ENCODE measurements at regions of chr22 and their contacts with region 1.

Region 1: DNA sequence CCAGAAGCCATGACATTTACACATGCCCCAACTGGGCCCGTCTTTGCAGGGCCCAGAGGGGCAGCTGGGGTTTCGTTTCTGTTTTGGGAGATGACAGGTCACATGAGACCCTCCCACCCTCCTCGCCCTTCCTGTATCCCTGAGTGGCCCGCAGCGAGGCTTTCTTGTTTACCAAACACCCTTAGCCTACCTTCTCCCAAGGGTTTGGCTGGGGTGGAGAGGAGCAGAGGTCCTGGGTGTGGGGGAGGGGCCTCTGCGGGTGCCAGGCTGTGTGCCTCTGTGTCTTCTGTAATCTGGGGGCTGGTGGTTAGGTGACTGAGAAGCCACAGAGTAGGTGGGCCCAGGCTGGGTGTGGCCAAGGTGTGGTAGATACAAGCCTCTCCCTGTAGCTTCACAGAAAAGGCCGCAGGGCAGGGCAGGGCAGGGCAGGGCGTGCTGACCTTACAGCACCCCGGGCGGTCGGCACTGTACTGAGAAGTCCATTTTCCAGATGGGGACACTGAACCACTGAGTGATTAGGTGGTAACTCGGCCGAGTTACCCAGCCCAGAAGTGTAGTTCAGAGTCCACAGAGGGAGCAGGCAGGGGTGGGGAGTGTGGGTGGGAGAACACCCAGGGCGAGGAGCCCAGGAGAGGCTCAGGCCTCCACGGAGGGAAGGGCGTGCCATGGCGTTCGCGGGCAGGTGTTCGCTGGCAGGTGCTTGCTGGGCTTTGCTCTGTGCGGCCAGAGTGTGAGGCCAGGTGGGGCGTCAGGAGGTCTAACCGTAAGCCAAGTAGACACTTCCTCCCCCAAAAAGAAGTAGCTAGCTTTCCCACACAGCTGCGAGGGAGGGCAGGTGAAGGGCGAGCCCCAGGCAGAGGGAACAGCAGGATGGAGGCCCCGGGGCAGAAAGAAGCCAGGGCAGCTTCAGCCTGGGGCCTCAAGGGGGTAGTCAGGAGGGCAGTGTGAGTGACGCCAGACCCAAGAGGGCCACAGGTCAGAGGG is 8.8 kb downstream of the PRR5 start:
- DNase-seq: no peak
- ATAC-seq: no peak
- H3K4me3 ChIP-seq: no peak overlapping the region
- H3K27ac ChIP-seq: no peak overlapping the region
- H3K4me1 ChIP-seq: no peaks in the 10 kb centered on the region
- H3K27me3 ChIP-seq: no peaks in the 10 kb centered on the region
- CTCF ChIP-seq: no peak

Region 2: DNA sequence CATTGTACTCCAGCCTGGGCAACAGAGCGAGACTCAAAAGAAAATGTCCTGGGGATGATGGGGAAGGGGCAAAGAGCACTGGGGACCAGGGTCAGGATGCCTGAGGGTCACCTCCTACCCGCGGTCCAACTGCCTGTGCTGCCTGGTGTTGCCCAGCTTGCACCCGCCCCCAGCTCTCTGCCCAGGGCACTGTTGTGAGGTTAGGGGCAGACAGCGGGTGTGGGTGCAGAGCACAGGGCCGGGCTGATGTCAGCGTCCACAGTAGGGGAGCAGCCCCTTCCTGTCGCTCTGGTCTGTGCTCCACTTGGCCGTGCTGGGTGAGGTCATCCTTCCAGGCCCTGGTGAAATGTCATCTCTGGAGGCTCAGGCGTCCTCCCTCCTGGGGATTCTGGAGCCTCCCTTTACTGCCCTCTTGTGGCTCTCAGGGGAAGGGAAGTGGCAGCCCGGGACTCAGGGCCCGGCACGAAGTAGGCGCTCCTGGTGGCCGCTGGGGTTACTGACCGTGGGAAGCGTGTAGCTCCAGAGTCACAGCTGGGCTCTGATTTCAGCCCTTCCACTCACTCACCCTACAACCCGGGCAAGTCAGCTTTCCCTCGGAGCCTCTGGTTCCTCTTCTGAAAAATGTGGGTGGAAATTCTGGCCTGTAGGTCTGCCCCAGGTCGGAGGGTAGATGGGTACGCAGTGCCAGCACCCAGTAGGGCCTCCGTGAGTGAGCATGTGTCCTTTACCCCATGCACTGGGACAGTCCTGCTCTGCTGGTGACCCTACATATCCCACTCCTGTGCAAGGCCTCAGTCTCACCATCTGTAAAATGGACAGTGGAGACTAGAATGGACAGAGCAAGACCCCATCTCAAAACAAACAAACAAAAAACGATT is 26.0 kb before region 1 on chr22:
- CTCF ChIA-PET with region 1: interaction called, 12 read pairs
- POLR2A ChIA-PET with region 1: no interaction called
- in situ Hi-C with region 1: no loop called
- intact Hi-C with region 1: no loop called
- DNase-seq: peak; percentile 77
- ATAC-seq: peak; percentile 96
- H3K4me3 ChIP-seq: no peak overlapping the region
- H3K27ac ChIP-seq: no peak overlapping the region
- H3K4me1 ChIP-seq: peaks cover 9% of the 10 kb centered on the region; the same call in 1 of the 2 replicates
- H3K27me3 ChIP-seq: no peaks in the 10 kb centered on the region
- CTCF ChIP-seq: peak; percentile 95

Region 3: DNA sequence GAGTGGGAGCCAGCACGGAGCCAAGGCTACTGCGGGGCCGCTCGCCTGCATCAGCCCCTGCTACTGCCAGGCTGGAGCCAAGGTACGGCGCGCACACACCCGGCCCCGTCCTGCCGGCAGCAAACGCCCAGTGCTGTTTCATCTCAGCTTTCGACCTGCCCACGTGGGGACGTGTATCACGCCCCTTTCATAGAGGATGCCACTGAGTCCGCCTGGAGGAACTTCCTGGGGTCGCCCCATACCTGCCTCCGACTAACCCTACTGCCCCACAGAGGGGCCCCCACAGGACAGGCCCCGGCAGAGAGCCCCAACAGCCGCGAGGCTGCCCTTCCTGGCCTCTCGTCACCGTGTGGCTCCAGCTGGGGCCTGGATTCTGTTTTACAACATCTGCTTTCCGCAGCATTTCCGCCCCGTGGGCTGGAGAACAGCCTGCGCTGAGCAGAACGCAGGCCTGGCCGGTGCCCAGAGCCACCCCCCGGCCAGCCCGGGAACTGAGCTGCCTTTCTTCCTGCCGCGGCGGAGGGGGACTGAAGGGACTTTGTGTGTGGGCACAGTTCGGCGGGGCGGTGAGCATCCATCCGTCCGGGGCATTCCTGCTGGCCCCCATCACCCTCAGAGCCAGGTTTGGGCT is 18.7 kb after region 1 on chr22:
- CTCF ChIA-PET with region 1: no interaction called
- POLR2A ChIA-PET with region 1: no interaction called
- in situ Hi-C with region 1: no loop called
- intact Hi-C with region 1: no loop called
- DNase-seq: no peak
- ATAC-seq: no peak
- H3K4me3 ChIP-seq: no peak overlapping the region
- H3K27ac ChIP-seq: no peak overlapping the region
- H3K4me1 ChIP-seq: no peaks in the 10 kb centered on the region
- H3K27me3 ChIP-seq: no peaks in the 10 kb centered on the region
- CTCF ChIP-seq: no peak